ENCODE measurements at regions of chr1 and their contacts with region 1.

Region 1: GRCh38 chr1:8817406-8818324 is at the start of gene RERE:
- DNase-seq: peak; percentile 95
- H3K4me3 ChIP-seq: peak within 1 kb of the TSS; percentile 84 to 98 (median 91)
- H3K27ac ChIP-seq: peak within 1 kb of the TSS; percentile 92
- H3K4me1 ChIP-seq: peaks cover 60% of the 10 kb centered on the region
- H3K27me3 ChIP-seq: no peaks in the 10 kb centered on the region
- CTCF ChIP-seq: no peak
- POLR2A ChIP-seq: peak; percentile 91
- total RNA-seq, gene RERE: 110 and 113 TPM in 2 replicates

Region 2: GRCh38 chr1:8660411-8660828 is 157.2 kb before region 1 on chr1:
- CTCF ChIA-PET with region 1: no interaction called
- POLR2A ChIA-PET with region 1: interaction called, 5 read pairs
- dilution Hi-C with region 1: no loop called
- intact Hi-C with region 1: loop called (anchors 5 kb)
- DNase-seq: peak; percentile 92
- H3K4me3 ChIP-seq: no peak overlapping the region
- H3K27ac ChIP-seq: peak overlapping the region; percentile 70
- H3K4me1 ChIP-seq: peaks cover 34% of the 10 kb centered on the region
- H3K27me3 ChIP-seq: no peaks in the 10 kb centered on the region
- CTCF ChIP-seq: no peak
- POLR2A ChIP-seq: no peak

Region 3: DNA sequence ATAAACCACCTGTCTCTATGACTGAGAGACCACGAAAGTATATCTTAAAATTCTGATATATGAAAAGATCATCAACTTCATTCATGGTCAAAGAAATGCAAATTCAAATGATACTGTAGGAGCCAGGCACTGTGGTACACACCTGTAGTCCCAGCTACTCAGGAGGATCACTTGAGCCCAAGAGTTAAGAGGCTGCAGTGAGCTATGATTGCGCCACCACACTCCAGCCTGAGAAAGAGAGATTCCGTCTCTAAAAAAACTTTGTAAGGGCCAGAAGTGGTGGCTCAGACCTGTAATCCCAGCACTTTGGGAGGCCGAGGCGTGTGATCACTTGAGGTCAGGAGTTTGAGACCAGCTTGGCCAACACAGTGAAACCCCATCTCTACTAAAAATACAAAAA is 17.2 kb before region 1 on chr1:
- CTCF ChIA-PET with region 1: interaction called, 12 read pairs
- POLR2A ChIA-PET with region 1: interaction called, 4 read pairs
- dilution Hi-C with region 1: no loop called
- intact Hi-C with region 1: no loop called
- DNase-seq: no peak
- H3K4me3 ChIP-seq: no peak overlapping the region
- H3K27ac ChIP-seq: no peak overlapping the region
- H3K4me1 ChIP-seq: no peaks in the 10 kb centered on the region
- H3K27me3 ChIP-seq: no peaks in the 10 kb centered on the region
- CTCF ChIP-seq: no peak
- POLR2A ChIP-seq: no peak

Region 4: DNA sequence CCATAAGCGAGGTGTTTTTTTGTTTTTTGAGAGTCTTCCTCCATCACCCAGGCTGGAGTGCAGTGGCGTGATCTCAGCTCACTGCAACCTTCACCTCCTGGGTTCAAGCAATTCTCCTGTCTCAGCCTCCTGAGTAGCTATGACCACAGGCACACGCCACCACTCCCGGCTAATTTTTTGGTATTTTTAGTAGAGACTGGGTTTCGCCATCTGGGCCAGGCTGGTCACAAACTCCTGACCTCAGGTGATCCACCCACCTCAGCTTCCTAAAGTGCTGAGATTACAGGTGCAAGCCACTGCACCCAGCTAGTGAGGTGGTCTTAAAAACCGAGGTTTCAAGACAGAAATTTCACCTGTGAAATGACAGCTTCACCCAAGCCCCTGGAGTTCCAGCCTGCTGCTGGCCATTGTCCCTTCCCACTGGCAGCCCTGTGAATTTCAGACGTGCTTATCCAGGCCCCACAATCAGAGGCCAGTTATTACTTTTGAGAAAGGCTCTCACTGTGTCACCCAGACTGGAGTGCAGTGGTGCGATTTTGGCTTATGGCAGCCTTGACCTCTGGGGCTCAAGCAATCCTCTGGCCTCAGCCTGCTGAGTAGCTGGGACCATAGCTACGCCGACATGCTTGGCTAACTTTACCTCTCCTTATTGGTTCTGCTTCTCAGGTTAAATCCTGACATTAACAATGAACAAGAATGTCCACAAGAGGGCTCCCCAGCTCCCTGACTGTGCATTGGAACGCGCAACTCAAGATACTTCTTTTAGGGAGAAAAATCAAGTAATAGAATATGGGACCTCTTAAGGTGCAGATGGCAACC is 41.4 kb after region 1 on chr1:
- CTCF ChIA-PET with region 1: interaction called, 4 read pairs
- POLR2A ChIA-PET with region 1: no interaction called
- dilution Hi-C with region 1: no loop called
- intact Hi-C with region 1: loop called (anchors 1 kb)
- DNase-seq: peak; percentile 83
- H3K4me3 ChIP-seq: no peak overlapping the region
- H3K27ac ChIP-seq: peak overlapping the region; percentile 80
- H3K4me1 ChIP-seq: peaks cover 36% of the 10 kb centered on the region
- H3K27me3 ChIP-seq: no peaks in the 10 kb centered on the region
- CTCF ChIP-seq: peak; percentile 65
- POLR2A ChIP-seq: peak; percentile 33

Region 5: GRCh38 chr1:8878448-8879347 is 61.0 kb after region 1 on chr1 and contains the start of gene ENO1:
- CTCF ChIA-PET with region 1: no interaction called
- POLR2A ChIA-PET with region 1: no interaction called
- dilution Hi-C with region 1: no loop called
- intact Hi-C with region 1: loop called (anchors 2 kb)
- DNase-seq: peak; percentile 99
- H3K4me3 ChIP-seq: peak within 1 kb of the TSS; percentile 48 to 83 (median 62)
- H3K27ac ChIP-seq: peak within 1 kb of the TSS; percentile 77
- H3K4me1 ChIP-seq: peaks cover 41% of the 10 kb centered on the region
- H3K27me3 ChIP-seq: no peaks in the 10 kb centered on the region
- CTCF ChIP-seq: no peak
- POLR2A ChIP-seq: peak; percentile 94
- total RNA-seq, gene ENO1: 1,530 and 1,593 TPM in 2 replicates

Measured in endothelial cell of umbilical vein (primary cell).